Left ventricle myocardium inferior (tissue), 1 donor: ENCODE measurements at regions of chr16 and their contacts with region 1.

Region 1: GRCh38 chr16:46607529-46607928 is 13.7 kb downstream of the SHCBP1 start:
- DNase-seq: no peak
- H3K4me3 ChIP-seq: no peak overlapping the region
- H3K27ac ChIP-seq: no peak overlapping the region
- H3K4me1 ChIP-seq: no peaks in the 10 kb centered on the region
- H3K27me3 ChIP-seq: no peaks in the 10 kb centered on the region
- CTCF ChIP-seq: peak; percentile 58

Region 2: GRCh38 chr16:46519063-46519462 is 88.5 kb before region 1 on chr16:
- intact Hi-C with region 1: no loop called
- DNase-seq: no peak
- H3K4me3 ChIP-seq: no peak overlapping the region
- H3K27ac ChIP-seq: no peak overlapping the region
- H3K4me1 ChIP-seq: no peaks in the 10 kb centered on the region
- H3K27me3 ChIP-seq: no peaks in the 10 kb centered on the region
- CTCF ChIP-seq: no peak

Region 3: DNA sequence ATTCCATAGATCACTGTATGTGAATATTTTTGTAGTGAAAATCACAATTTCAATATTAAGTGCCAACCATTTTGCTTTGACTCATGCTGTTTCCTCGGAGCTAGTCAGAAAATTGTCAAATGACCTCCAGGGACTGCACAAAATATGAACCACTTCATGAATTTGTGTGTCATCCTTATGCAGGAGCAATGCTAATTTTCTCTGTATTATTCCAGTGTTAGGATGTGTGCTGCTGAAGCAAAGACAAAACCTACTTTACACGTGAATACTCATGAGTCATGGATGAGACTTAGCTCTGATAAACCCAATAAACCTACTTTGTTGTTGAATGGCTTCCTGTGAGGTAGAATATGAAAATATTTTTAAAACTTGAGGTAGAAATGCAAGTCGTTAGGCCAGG is 51.6 kb before region 1 on chr16:
- intact Hi-C with region 1: loop called (anchors 10 kb)
- DNase-seq: no peak
- H3K4me3 ChIP-seq: no peak overlapping the region
- H3K27ac ChIP-seq: no peak overlapping the region
- H3K4me1 ChIP-seq: no peaks in the 10 kb centered on the region
- H3K27me3 ChIP-seq: peaks cover 33% of the 10 kb centered on the region
- CTCF ChIP-seq: no peak

Region 4: GRCh38 chr16:46711106-46712058 is 103.9 kb after region 1 on chr16:
- intact Hi-C with region 1: no loop called
- DNase-seq: peak; percentile 76
- H3K4me3 ChIP-seq: peak overlapping the region; percentile 1
- H3K27ac ChIP-seq: peak overlapping the region; percentile 82
- H3K4me1 ChIP-seq: peaks cover 63% of the 10 kb centered on the region
- H3K27me3 ChIP-seq: no peaks in the 10 kb centered on the region
- CTCF ChIP-seq: no peak